ENCODE measurements at regions of chr21 and their contacts with region 1.

Region 1: DNA sequence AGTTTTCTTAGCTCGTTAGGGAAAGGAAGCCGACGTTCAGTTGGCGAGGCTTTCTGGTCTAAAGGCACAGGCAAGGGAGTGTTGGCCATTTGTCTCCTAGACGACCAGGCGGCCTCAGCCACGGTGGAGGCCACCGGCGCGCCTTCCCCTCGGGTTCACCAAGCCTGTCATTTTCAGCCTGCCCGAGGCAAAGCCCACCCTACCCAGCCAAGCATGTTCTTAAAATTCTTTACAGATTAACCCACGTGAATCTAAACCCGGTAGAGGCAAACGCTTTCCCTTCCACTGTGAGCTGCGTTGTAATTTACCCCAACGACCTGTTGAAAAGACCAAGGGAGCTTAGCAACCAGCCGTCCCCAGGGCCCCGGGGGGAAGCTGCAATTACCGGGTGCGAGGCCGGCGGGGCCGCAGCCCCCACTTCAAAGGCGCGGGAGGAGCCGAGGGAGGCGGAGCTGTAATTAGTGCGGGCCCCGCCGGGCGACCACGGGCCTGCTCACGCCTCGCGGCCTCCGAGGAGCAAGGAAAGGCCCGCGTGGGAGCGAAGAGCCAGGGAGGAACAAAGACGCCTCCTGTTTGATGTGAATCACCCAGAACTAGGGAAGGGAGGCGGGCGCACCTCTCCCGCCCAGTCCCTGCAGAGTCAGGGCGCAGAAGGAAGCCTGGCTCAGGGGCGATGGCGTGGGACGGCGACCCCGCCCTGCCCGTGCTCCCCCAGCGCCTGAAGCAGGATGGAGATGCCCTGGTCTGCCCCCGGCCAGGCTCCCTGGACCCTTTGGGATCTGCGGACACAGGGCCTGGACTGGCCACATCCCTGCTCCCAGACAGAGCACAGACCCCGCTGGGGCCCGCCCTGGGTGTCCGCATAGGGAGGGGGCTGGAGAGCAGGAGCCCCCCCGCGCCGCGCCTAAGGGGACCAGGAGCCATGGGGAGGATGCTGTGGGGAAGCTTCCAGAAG is 12.1 kb upstream of the TSPEAR start:
- DNase-seq: peak in 1 of 2 experiments; percentile 28
- H3K4me3 ChIP-seq: no peak overlapping the region
- H3K4me1 ChIP-seq: no peaks in the 10 kb centered on the region
- H3K27me3 ChIP-seq: peaks cover 19% of the 10 kb centered on the region

Region 2: GRCh38 chr21:44353191-44353970 is 370.1 kb before region 1 on chr21 and contains the start of gene TRPM2:
- in situ Hi-C with region 1: loop called (anchors 10 kb)
- DNase-seq: no peak
- H3K4me3 ChIP-seq: no peak within 1 kb of the TSS
- H3K4me1 ChIP-seq: no peaks in the 10 kb centered on the region
- H3K27me3 ChIP-seq: peaks cover 10% of the 10 kb centered on the region; the same call in 1 of the 2 replicates